Left cardiac atrium (tissue), 4 donors: ENCODE measurements at regions of chr2 and their contacts with region 1.

Region 1: GRCh38 chr2:107576991-107577390 is 249.7 kb upstream of the RGPD4 start:
- DNase-seq: no peak
- ATAC-seq: no peak

Region 2: DNA sequence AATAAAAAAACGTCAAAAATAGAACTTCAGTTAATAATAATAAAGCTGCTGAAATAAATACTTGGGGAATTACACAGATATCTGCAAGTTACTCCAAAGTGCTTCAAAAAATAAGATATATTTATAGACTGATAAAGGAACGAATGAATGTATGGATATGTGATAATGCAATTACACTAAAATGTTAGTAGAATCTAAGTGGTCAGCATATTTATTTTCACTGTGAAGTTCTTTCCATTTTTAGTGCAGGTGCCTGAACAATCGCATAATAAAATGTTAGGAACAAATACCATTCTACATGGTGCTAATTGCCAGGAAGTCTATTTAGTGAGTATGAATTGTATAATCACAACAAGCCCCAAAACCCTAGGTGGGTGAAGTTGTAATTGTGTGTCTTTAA is 80.1 kb after region 1 on chr2:
- intact Hi-C with region 1: no loop called
- DNase-seq: no peak
- ATAC-seq: no peak

Region 3: DNA sequence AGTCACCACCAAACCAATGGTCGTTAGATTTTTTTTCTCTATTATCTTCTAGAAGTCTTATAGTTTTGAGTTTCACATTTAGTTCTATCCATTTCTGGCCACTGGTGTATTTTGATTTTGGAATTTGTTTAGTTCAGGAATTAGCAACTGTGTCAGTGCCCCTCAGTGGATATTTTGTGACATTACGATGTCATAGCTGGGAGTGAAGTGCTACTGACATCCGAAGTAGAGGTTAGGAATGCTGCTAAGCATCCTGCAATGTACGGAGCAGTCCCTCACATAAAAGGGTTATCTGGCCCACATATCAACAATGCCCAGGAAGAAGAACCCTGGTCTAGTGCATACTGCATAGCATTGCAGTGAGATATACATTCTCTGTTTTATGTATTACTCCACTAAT is 92.3 kb after region 1 on chr2:
- intact Hi-C with region 1: loop called in 1 of 2 experiments (anchors 5 kb)
- DNase-seq: no peak
- ATAC-seq: peak; percentile 45 to 61